ENCODE measurements at regions of chr5 and their contacts with region 1.

Region 1: GRCh38 chr5:180090098-180090768 is 18.7 kb upstream of the RNF130 start:
- DNase-seq: peak; percentile 89
- ATAC-seq: peak; percentile 96

Region 2: DNA sequence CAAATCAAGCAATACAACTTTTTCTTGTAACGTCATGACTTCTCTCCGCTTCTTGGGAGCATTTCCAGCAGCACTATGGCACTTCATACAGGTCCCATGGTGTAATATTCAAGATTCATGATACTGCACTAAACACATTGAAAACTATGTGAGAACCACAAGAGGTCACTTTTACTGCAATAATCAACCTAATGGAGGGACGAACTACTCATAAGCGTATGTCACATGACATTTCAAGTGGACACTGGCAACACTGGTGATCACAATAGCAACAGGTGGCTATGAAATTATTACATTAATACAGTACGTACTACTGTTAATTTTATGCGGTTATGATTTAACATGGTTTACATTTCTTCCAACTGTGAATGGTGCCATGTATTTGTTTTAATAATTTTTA is 103.9 kb before region 1 on chr5:
- intact Hi-C with region 1: loop called (anchors 5 kb)
- DNase-seq: no peak
- ATAC-seq: peak; percentile 75